MCF 10A (cell line): ENCODE measurements at regions of chr17 and their contacts with region 1.

Region 1: DNA sequence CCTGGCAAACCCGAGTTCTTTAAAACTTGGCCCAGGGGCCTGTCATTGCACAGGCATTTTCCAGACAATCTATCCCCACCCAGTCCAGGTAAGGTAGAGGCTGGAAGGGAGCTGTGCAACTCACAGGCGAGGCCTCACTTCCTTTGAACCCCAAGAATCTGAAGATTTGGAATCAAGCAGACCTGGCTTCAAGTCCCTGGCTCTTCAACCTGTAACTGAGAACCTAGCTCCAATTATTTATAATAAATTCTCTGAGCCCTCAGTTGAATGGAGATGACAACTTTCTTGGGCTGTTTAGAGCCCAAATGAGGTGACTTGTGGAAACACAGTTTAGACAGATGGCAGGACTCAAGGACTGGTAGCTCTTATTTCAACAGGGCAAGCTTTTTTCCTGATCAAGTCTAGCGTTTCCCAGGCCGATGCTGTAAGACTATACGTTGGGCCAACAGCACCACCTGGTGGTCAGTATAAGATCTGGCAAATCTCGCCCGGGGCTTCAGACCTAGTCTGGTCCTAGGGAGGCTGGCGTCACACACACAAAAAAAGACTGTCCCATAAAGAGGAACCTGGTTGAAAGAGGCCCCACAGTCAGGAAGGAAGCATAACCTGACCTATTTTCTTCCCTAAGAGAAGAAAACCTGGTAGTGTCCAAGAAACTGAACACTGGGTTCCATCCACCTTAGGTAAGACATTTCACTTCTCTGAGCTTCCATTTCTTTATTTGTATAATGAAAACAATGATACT is 117.9 kb downstream of the C17orf67 start:
- DNase-seq: peak; percentile 85
- H3K4me3 Mint-ChIP-seq: no peak overlapping the region
- H3K27ac Mint-ChIP-seq: no peak overlapping the region
- H3K4me1 Mint-ChIP-seq: peaks cover 10% of the 10 kb centered on the region
- H3K27me3 Mint-ChIP-seq: no peaks in the 10 kb centered on the region
- CTCF ChIP-seq: peak; percentile 77

Region 2: GRCh38 chr17:56125830-56126819 is 589.7 kb before region 1 on chr17:
- CTCF ChIA-PET with region 1: interaction called, 5 read pairs
- POLR2A ChIA-PET with region 1: interaction called, 3 read pairs
- intact Hi-C with region 1: loop called (anchors 5 kb)
- DNase-seq: peak; percentile 77
- H3K4me3 Mint-ChIP-seq: no peak overlapping the region
- H3K27ac Mint-ChIP-seq: no peak overlapping the region
- H3K4me1 Mint-ChIP-seq: no peaks in the 10 kb centered on the region
- H3K27me3 Mint-ChIP-seq: no peaks in the 10 kb centered on the region
- CTCF ChIP-seq: peak; percentile 73

Region 3: DNA sequence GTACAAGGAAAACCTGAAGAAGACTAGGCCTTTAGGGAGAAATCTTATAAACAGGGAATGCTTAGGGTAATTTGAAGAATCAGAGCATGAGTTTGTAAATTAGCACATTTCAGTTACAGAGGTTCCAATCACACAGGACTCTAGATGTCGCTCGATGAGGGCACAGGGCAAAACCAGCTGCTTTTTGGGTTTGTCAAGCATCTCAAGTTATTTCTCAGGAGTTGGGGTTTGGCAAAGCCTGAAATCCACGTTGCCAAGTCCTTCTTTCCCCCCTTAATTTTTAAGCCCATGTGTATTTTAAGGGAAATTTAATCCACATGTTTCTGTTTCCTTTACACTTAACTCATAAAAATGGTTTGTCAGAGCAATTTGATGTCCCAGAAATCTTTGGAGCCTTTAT is 415.6 kb before region 1 on chr17:
- CTCF ChIA-PET with region 1: no interaction called
- POLR2A ChIA-PET with region 1: no interaction called
- intact Hi-C with region 1: no loop called
- DNase-seq: no peak
- H3K4me3 Mint-ChIP-seq: no peak overlapping the region
- H3K27ac Mint-ChIP-seq: no peak overlapping the region
- H3K4me1 Mint-ChIP-seq: no peaks in the 10 kb centered on the region
- H3K27me3 Mint-ChIP-seq: no peaks in the 10 kb centered on the region
- CTCF ChIP-seq: no peak

Region 4: GRCh38 chr17:56581635-56582627 is 133.9 kb before region 1 on chr17:
- CTCF ChIA-PET with region 1: interaction called, 11 read pairs
- POLR2A ChIA-PET with region 1: no interaction called
- intact Hi-C with region 1: no loop called
- DNase-seq: no peak
- H3K4me3 Mint-ChIP-seq: no peak overlapping the region
- H3K27ac Mint-ChIP-seq: no peak overlapping the region
- H3K4me1 Mint-ChIP-seq: no peaks in the 10 kb centered on the region
- H3K27me3 Mint-ChIP-seq: peaks cover 14% of the 10 kb centered on the region
- CTCF ChIP-seq: no peak

Region 5: GRCh38 chr17:56624315-56624714 is 91.5 kb before region 1 on chr17:
- CTCF ChIA-PET with region 1: interaction called, 20 read pairs
- POLR2A ChIA-PET with region 1: no interaction called
- intact Hi-C with region 1: no loop called
- DNase-seq: no peak
- H3K4me3 Mint-ChIP-seq: no peak overlapping the region
- H3K27ac Mint-ChIP-seq: no peak overlapping the region
- H3K4me1 Mint-ChIP-seq: no peaks in the 10 kb centered on the region
- H3K27me3 Mint-ChIP-seq: no peaks in the 10 kb centered on the region
- CTCF ChIP-seq: no peak

Region 6: GRCh38 chr17:56653877-56654276 is 61.9 kb before region 1 on chr17:
- CTCF ChIA-PET with region 1: interaction called, 34 read pairs
- POLR2A ChIA-PET with region 1: no interaction called
- intact Hi-C with region 1: loop called (anchors 1 kb)
- DNase-seq: peak; percentile 78
- H3K4me3 Mint-ChIP-seq: no peak overlapping the region
- H3K27ac Mint-ChIP-seq: peak overlapping the region; percentile 40
- H3K4me1 Mint-ChIP-seq: peaks cover 2% of the 10 kb centered on the region
- H3K27me3 Mint-ChIP-seq: no peaks in the 10 kb centered on the region
- CTCF ChIP-seq: peak; percentile 49

Region 7: GRCh38 chr17:56699186-56699895 is 16.4 kb before region 1 on chr17:
- CTCF ChIA-PET with region 1: interaction called, 43 read pairs
- POLR2A ChIA-PET with region 1: interaction called, 6 read pairs
- intact Hi-C with region 1: no loop called
- DNase-seq: peak; percentile 98
- H3K4me3 Mint-ChIP-seq: peak overlapping the region; percentile 67
- H3K27ac Mint-ChIP-seq: peak overlapping the region; percentile 70
- H3K4me1 Mint-ChIP-seq: peaks cover 14% of the 10 kb centered on the region
- H3K27me3 Mint-ChIP-seq: no peaks in the 10 kb centered on the region
- CTCF ChIP-seq: no peak

Region 8: GRCh38 chr17:56786989-56787482 is 71.3 kb after region 1 on chr17:
- CTCF ChIA-PET with region 1: interaction called, 67 read pairs
- POLR2A ChIA-PET with region 1: interaction called, 8 read pairs
- intact Hi-C with region 1: no loop called
- DNase-seq: peak; percentile 97
- H3K4me3 Mint-ChIP-seq: peak overlapping the region; percentile 61
- H3K27ac Mint-ChIP-seq: peak overlapping the region; percentile 96
- H3K4me1 Mint-ChIP-seq: peaks cover 40% of the 10 kb centered on the region
- H3K27me3 Mint-ChIP-seq: no peaks in the 10 kb centered on the region
- CTCF ChIP-seq: no peak

Region 9: DNA sequence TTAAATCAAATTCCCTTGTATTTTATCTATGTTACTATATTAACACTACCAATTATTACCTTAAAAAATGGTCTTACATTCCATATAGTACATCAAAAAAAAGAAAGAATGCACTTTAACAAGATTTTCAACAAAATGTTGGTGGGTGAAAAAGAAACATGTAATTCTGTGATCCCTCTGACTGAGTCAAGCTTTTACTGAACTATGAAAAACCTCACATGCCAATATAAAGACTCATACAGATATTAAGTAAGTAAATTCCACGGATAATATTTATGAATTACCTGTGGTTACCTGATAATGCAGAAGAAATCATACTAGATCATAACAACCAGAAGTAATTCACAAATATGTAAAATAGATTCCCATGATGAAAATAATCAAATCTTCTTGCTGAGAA is 232.7 kb after region 1 on chr17:
- CTCF ChIA-PET with region 1: no interaction called
- POLR2A ChIA-PET with region 1: no interaction called
- intact Hi-C with region 1: no loop called
- DNase-seq: no peak
- H3K4me3 Mint-ChIP-seq: no peak overlapping the region
- H3K27ac Mint-ChIP-seq: no peak overlapping the region
- H3K4me1 Mint-ChIP-seq: no peaks in the 10 kb centered on the region
- H3K27me3 Mint-ChIP-seq: no peaks in the 10 kb centered on the region
- CTCF ChIP-seq: no peak

Region 10: GRCh38 chr17:57009737-57010445 is 294.1 kb after region 1 on chr17:
- CTCF ChIA-PET with region 1: no interaction called
- POLR2A ChIA-PET with region 1: no interaction called
- intact Hi-C with region 1: no loop called
- DNase-seq: peak; percentile 68
- H3K4me3 Mint-ChIP-seq: no peak overlapping the region
- H3K27ac Mint-ChIP-seq: no peak overlapping the region
- H3K4me1 Mint-ChIP-seq: peaks cover 6% of the 10 kb centered on the region
- H3K27me3 Mint-ChIP-seq: no peaks in the 10 kb centered on the region
- CTCF ChIP-seq: peak; percentile 76